ENCODE measurements at regions of chr11 and their contacts with region 1.

Region 1: DNA sequence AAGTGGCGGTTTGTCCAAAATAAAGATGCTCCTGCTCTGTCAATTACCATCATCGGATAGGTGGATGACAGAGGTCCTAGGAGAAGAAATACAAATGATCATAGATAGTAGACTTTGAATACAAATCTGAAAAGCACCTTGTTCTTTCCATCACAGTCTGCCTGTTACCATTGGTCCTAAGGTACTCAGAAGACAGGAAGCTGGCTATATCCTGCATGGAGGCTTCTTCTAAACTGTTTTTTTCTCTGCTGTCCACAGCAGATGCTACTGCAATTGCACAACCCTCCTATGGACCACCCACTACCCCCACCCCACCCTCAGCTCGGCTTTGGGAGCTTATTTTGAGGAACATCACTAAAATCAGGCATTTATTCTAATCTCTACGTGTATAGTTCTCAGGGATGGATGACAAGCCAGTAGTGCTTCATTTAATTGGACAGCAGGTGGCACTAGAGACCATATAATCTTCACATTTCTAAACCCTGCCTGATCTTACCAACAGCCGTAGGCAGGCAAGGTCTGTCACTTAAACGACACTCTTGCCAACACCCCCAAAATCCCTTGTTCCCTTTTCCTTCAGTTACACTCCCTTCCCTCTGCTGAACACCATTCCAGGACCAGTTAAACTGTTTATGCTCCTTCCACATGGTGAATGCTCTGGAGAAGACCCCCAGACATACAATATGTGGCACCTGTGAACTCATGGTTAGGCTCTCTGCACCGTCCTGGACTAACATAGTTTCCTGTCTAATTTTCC is 6.6 kb upstream of the PTS start:
- DNase-seq: peak in 10 of 14 experiments; percentile 4 to 89 (median 31)
- ATAC-seq: peak; percentile 100
- H3K4me3 ChIP-seq: no peak overlapping the region
- H3K4me3 Mint-ChIP-seq: peak overlapping the region; percentile 5
- H3K27ac ChIP-seq: no peak overlapping the region
- H3K27ac Mint-ChIP-seq: no peak overlapping the region
- H3K4me1 ChIP-seq: peaks cover 6% of the 10 kb centered on the region
- H3K4me1 Mint-ChIP-seq: peaks cover 6% of the 10 kb centered on the region
- H3K27me3 ChIP-seq: no peaks in the 10 kb centered on the region
- H3K27me3 Mint-ChIP-seq: no peaks in the 10 kb centered on the region
- CTCF ChIP-seq: peak; percentile 78

Region 2: DNA sequence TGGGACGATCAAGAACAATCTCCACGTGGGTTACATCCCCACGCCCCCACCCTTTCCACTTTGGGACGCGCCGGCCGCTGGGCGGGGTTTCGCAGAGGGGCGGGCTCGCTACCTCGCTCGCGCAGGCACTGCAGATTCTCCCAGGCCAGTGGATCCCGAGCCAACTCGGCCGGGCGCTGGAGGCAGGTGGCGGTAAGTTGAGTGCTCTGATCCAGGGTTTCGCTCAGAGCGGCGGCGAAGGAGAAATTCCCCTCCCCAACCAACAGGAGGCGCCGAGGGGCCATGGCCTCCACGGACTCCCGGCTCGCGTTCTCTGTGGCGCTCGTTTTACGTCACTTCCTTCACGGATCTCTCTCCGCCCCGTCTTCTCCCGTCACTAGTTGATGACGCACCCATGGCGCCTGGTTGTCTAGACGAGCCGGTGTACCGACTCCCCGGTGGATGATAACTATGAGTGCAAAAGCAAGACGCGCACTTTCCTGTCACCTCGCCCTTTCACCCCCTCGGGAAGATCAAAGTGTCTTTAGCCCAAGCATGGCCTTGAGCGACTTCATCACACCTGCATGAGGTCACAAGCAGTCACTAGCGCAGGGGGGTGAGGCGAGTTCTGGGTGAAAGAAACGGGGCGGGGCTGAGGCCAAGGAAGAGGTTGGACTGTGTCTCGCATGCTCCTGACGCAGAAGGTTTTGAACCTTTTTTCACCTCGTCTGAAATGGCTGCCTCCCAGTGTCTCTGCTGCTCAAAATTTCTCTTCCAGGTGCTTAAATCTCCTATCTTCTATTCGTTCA is 340.6 kb before region 1 on chr11 and contains the starts of genes CFAP68 and FDXACB1:
- CTCF ChIA-PET with region 1: no interaction called
- POLR2A ChIA-PET with region 1: no interaction called
- intact Hi-C with region 1: loop called in 1 of 2 experiments (anchors 5 kb)
- DNase-seq: peak; percentile 89 to 99 (median 93)
- ATAC-seq: peak; percentile 88
- H3K4me3 ChIP-seq: peak within 1 kb of the TSS; percentile 76
- H3K4me3 Mint-ChIP-seq: peak within 1 kb of the TSS; percentile 92
- H3K27ac ChIP-seq: peak within 1 kb of the TSS; percentile 97 to 99
- H3K27ac Mint-ChIP-seq: peak within 1 kb of the TSS; percentile 94
- H3K4me1 ChIP-seq: peaks cover 14% of the 10 kb centered on the region
- H3K4me1 Mint-ChIP-seq: peaks cover 18% of the 10 kb centered on the region
- H3K27me3 ChIP-seq: no peaks in the 10 kb centered on the region
- H3K27me3 Mint-ChIP-seq: no peaks in the 10 kb centered on the region
- CTCF ChIP-seq: peak; percentile 98
- total RNA-seq, gene CFAP68: 18.7 to 21.0 TPM
- total RNA-seq, gene FDXACB1: 3.4 to 3.9 TPM

Region 3: GRCh38 chr11:112113539-112114457 is 105.9 kb before region 1 on chr11:
- CTCF ChIA-PET with region 1: no interaction called
- POLR2A ChIA-PET with region 1: no interaction called
- intact Hi-C with region 1: loop called in 1 of 2 experiments (anchors 5 kb)
- DNase-seq: peak in 4 of 14 experiments; percentile 13 to 68 (median 58)
- ATAC-seq: peak; percentile 57
- H3K4me3 ChIP-seq: no peak overlapping the region
- H3K4me3 Mint-ChIP-seq: no peak overlapping the region
- H3K27ac ChIP-seq: no peak overlapping the region
- H3K27ac Mint-ChIP-seq: no peak overlapping the region
- H3K4me1 ChIP-seq: no peaks in the 10 kb centered on the region
- H3K4me1 Mint-ChIP-seq: no peaks in the 10 kb centered on the region
- H3K27me3 ChIP-seq: no peaks in the 10 kb centered on the region
- H3K27me3 Mint-ChIP-seq: no peaks in the 10 kb centered on the region
- CTCF ChIP-seq: peak; percentile 88

Region 4: DNA sequence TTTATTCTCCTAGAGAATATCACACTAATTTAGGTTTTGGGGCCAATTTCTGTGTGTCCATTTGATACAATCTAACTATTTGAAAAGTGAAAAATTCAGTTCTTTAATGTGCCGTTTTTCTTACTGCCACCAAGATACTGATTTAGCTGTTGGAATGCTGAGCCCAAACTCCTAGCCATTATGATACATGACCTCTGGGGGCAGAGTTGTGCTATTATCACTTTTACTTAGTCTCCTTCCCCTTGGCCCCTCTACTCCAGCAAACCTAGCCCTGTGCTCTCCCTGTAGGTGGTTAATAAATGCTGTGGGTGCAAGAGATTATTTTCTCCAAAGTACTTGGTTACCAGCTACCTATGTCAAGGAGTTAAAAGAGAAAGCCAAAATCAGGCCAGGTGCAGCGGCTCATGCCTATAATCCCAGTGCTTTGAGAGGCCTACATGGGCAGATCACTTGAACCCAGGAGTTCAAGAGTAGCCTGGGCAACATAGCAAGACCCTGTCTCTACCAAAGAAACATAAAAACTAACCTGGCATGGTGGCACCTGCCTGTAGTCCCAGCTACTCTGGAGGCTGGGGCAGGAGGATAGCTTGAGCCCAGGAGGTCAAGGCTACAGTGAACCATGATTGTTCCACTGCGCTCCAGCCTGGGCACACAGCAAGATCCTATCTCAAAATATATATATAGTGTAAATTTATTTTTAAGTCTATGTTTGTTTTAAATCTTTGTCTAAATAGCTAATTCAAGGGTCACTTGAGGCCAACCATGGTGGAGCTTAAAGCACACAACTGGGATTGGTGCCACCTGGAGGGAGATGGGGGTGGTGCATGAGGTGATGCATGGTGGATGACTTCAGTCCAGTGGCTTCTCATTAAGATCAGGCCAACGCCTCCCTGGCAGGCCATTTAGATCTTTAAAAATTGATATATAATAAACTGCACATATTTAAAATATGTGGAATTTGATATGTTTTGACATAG is 234.2 kb after region 1 on chr11:
- CTCF ChIA-PET with region 1: interaction called, 3 read pairs
- POLR2A ChIA-PET with region 1: no interaction called
- intact Hi-C with region 1: loop called in 1 of 2 experiments (anchors 10 kb)
- DNase-seq: peak in 11 of 14 experiments; percentile 2 to 62 (median 25)
- ATAC-seq: peak; percentile 52
- H3K4me3 ChIP-seq: no peak overlapping the region
- H3K4me3 Mint-ChIP-seq: no peak overlapping the region
- H3K27ac ChIP-seq: no peak overlapping the region
- H3K27ac Mint-ChIP-seq: no peak overlapping the region
- H3K4me1 ChIP-seq: peaks cover 3% of the 10 kb centered on the region
- H3K4me1 Mint-ChIP-seq: no peaks in the 10 kb centered on the region
- H3K27me3 ChIP-seq: no peaks in the 10 kb centered on the region
- H3K27me3 Mint-ChIP-seq: no peaks in the 10 kb centered on the region
- CTCF ChIP-seq: peak; percentile 58

Region 5: GRCh38 chr11:112795142-112795815 is 575.6 kb after region 1 on chr11:
- CTCF ChIA-PET with region 1: no interaction called
- POLR2A ChIA-PET with region 1: no interaction called
- intact Hi-C with region 1: loop called in 1 of 2 experiments (anchors 2 kb)
- DNase-seq: peak in 5 of 14 experiments; percentile 0 to 27 (median 21)
- ATAC-seq: no peak
- H3K4me3 ChIP-seq: no peak overlapping the region
- H3K4me3 Mint-ChIP-seq: no peak overlapping the region
- H3K27ac ChIP-seq: no peak overlapping the region
- H3K27ac Mint-ChIP-seq: no peak overlapping the region
- H3K4me1 ChIP-seq: no peaks in the 10 kb centered on the region
- H3K4me1 Mint-ChIP-seq: peaks cover 5% of the 10 kb centered on the region
- H3K27me3 ChIP-seq: peaks cover 0 to 3% of the 10 kb centered on the region in 2 experiments
- H3K27me3 Mint-ChIP-seq: no peaks in the 10 kb centered on the region
- CTCF ChIP-seq: peak; percentile 45

Region 6: DNA sequence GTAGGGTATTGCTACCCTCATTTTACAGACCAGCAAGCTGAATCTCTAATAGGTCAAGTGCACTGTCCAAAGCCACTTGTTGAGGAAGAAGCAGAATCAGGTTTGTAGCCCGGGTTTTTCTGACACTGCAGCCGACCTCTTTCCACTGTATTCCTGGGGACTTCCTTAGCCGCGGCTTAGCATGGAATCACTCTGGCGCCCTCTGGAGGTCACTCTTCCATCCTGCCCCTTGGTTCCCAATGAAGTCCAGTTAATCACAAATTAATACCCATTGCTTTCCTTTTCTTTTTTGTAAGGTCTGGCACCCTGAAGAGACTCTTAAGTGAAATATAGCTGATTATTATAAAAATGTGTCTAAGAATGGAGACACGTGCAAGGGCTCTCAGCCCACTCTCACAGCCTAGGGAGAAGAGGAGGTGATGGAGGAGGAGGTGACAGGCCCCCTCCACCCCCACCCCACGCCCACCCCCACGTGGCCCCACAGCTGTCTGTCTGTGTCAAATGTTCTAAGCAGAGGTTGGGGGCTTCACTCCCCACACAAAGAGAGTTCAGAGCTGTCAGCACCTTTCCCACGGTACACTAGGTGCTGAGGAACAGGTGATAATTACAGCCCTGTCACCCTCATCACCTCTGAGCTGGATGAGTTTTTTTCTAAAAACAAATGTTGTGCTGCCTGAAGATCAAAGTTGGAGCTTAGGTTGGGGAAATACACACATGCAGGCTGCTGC is 1313.2 kb after region 1 on chr11:
- CTCF ChIA-PET with region 1: no interaction called
- POLR2A ChIA-PET with region 1: no interaction called
- intact Hi-C with region 1: loop called in 1 of 2 experiments (anchors 10 kb)
- DNase-seq: peak; percentile 26 to 74 (median 44)
- ATAC-seq: peak; percentile 32
- H3K4me3 ChIP-seq: no peak overlapping the region
- H3K4me3 Mint-ChIP-seq: no peak overlapping the region
- H3K27ac ChIP-seq: no peak overlapping the region
- H3K27ac Mint-ChIP-seq: no peak overlapping the region
- H3K4me1 ChIP-seq: peaks cover 3% of the 10 kb centered on the region
- H3K4me1 Mint-ChIP-seq: no peaks in the 10 kb centered on the region
- H3K27me3 ChIP-seq: no peaks in the 10 kb centered on the region
- H3K27me3 Mint-ChIP-seq: peaks cover 34% of the 10 kb centered on the region
- CTCF ChIP-seq: peak; percentile 69

Region 7: GRCh38 chr11:113796663-113797259 is 1577.1 kb after region 1 on chr11:
- CTCF ChIA-PET with region 1: no interaction called
- POLR2A ChIA-PET with region 1: no interaction called
- intact Hi-C with region 1: loop called in 1 of 2 experiments (anchors 5 kb)
- DNase-seq: peak in 4 of 14 experiments; percentile 24 to 53 (median 40)
- ATAC-seq: peak; percentile 59
- H3K4me3 ChIP-seq: no peak overlapping the region
- H3K4me3 Mint-ChIP-seq: no peak overlapping the region
- H3K27ac ChIP-seq: no peak overlapping the region
- H3K27ac Mint-ChIP-seq: no peak overlapping the region
- H3K4me1 ChIP-seq: no peaks in the 10 kb centered on the region
- H3K4me1 Mint-ChIP-seq: no peaks in the 10 kb centered on the region
- H3K27me3 ChIP-seq: no peaks in the 10 kb centered on the region
- H3K27me3 Mint-ChIP-seq: no peaks in the 10 kb centered on the region
- CTCF ChIP-seq: peak; percentile 60